ENCODE measurements at regions of chr11 and their contacts with region 1.

Region 1: GRCh38 chr11:63838678-63839507 is at the start of gene MARK2:
- DNase-seq: peak; percentile 98 to 100
- ATAC-seq: peak; percentile 96
- H3K4me3 ChIP-seq: peak within 1 kb of the TSS; percentile 86 to 89
- H3K27ac ChIP-seq: peak within 1 kb of the TSS in 1 of 2 donors; percentile 93
- H3K4me1 ChIP-seq: peaks cover 0 to 6% of the 10 kb centered on the region in 2 donors
- H3K27me3 ChIP-seq: no peaks in the 10 kb centered on the region
- total RNA-seq, gene MARK2: 29.6 to 32.5 TPM

Region 2: DNA sequence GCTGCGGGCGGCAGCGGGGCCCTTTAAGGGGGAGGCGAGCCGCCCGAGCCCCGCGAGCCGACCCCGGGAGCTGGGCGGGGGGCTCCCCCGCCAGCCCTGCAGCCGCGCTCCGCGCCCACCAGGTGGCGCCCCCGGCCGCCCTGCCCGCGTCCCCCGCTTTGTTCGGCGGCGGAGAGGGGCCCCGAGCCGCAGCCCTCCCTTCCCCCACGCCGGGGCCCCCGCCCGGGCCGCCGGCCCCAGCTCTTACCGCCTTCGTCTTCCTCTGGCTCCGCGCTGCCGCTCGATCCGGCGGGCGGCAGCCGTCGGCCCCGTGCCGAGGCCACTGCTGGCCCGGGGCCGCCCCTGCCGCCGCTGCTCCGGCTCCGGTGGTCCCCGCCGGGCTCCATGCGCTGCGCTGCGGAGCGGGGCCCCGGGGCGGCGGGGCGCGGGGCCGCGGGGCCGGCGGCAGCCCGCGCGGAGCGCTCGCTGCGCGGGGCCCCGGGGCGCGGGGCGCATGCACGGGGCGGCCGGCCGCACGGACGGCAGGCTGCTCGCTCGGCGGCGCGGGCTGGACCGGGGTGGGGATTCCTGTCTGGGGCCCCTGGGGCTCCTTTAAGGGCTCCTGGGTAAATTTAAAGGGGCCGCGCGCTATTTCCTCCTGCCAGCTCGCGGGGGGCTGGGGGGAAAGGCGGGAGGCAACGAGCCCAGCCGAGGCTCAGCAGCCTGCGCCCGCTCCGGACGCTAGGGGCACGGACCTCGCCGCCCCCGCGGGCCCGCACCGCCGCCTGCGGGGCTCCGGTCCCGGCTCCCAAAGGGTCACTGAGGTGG is 70.5 kb before region 1 on chr11 and contains the start of gene ZFTA:
- intact Hi-C with region 1: loop called in 1 of 2 experiments (anchors 10 kb)
- DNase-seq: peak; percentile 78 to 87
- ATAC-seq: peak; percentile 52
- H3K4me3 ChIP-seq: peak within 1 kb of the TSS; percentile 93 to 96
- H3K27ac ChIP-seq: peak within 1 kb of the TSS in 1 of 2 donors; percentile 29
- H3K4me1 ChIP-seq: no peaks in the 10 kb centered on the region
- H3K27me3 ChIP-seq: no peaks in the 10 kb centered on the region
- total RNA-seq, gene ZFTA: 20.1 to 30.9 TPM

Region 3: DNA sequence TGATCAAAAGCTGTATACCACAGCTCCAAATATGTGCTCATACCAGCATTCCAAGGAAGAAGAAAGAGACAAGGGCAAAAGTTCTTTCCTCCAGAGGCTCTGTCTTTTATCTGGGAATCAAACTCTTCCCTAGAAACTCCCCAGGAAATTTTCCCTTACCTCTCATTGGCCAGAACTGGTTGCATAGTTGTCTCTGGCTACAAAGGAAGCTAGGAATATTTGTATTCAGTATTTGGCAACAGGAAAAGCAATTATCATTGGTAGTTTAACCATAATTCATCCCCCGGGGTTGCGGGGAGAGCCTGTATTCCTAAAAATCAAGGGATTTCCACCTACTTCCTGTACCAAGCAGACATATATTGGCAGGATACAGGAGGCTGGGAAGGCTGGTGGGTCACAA is 59.9 kb before region 1 on chr11:
- intact Hi-C with region 1: no loop called
- DNase-seq: no peak
- ATAC-seq: no peak
- H3K4me3 ChIP-seq: no peak overlapping the region
- H3K27ac ChIP-seq: no peak overlapping the region
- H3K4me1 ChIP-seq: no peaks in the 10 kb centered on the region
- H3K27me3 ChIP-seq: no peaks in the 10 kb centered on the region

Region 4: GRCh38 chr11:63871962-63872799 is 33.3 kb after region 1 on chr11:
- intact Hi-C with region 1: loop called in 1 of 2 experiments (anchors 5 kb)
- DNase-seq: peak; percentile 81 to 91
- ATAC-seq: peak; percentile 93
- H3K4me3 ChIP-seq: no peak overlapping the region
- H3K27ac ChIP-seq: peak overlapping the region in 1 of 2 donors; percentile 82
- H3K4me1 ChIP-seq: peaks cover 0 to 4% of the 10 kb centered on the region in 2 donors
- H3K27me3 ChIP-seq: no peaks in the 10 kb centered on the region

Region 5: GRCh38 chr11:63882555-63883242 is 43.8 kb after region 1 on chr11:
- intact Hi-C with region 1: no loop called
- DNase-seq: peak; percentile 76 to 77
- ATAC-seq: peak; percentile 71
- H3K4me3 ChIP-seq: no peak overlapping the region
- H3K27ac ChIP-seq: no peak overlapping the region
- H3K4me1 ChIP-seq: no peaks in the 10 kb centered on the region
- H3K27me3 ChIP-seq: no peaks in the 10 kb centered on the region

Region 6: DNA sequence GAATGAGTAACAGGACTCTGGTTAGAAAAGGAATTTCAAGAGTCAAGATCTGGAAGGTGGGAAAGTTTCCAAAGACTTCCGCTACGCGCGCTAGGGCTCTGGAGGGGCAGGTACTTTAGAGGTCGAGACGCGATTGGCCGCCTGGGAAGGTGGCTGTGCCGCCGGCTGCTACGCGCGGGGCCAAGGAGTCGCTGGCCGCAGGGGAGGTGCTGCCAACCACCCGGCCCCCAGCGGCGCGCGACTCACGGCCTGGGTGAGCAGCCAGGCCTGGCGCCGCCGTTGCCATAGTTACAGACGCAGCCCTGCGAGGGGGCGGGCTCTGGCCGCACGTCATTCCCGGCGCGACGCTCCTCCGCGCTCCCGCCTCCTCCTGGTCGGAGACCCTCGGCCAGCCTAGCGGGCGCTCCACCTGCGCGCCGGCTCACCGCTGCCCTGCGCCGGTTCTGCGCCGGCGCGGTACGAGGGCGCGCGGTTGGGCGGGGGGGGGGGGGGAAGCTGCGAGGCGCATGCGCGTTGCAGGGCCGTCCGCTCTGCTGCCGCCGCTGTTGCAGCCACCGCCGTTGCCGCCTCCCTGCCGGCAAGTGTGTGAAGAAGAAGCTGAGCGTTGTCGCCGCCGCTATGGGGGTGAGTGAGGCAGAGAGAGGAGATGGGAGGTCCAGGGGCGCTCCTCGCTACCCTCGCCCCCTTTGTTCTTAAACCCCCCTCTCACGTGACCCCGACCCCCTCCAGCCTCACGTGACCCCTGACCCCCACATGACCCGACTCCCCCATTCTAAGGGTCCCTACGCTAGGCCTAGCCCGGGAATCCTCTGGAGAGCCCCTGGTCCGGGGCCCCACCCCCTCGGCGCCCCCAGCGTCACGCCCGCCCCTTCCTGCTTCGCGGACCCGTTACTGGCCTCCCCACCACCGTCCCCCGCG is 99.8 kb after region 1 on chr11 and contains the start of gene NAA40:
- intact Hi-C with region 1: loop called in 1 of 2 experiments (anchors 2 kb)
- DNase-seq: peak; percentile 95 to 97
- ATAC-seq: peak; percentile 95
- H3K4me3 ChIP-seq: peak within 1 kb of the TSS; percentile 33 to 71
- H3K27ac ChIP-seq: peak within 1 kb of the TSS in 1 of 2 donors; percentile 48
- H3K4me1 ChIP-seq: no peaks in the 10 kb centered on the region
- H3K27me3 ChIP-seq: no peaks in the 10 kb centered on the region
- total RNA-seq, gene NAA40: 16.1 to 26.9 TPM

Region 7: DNA sequence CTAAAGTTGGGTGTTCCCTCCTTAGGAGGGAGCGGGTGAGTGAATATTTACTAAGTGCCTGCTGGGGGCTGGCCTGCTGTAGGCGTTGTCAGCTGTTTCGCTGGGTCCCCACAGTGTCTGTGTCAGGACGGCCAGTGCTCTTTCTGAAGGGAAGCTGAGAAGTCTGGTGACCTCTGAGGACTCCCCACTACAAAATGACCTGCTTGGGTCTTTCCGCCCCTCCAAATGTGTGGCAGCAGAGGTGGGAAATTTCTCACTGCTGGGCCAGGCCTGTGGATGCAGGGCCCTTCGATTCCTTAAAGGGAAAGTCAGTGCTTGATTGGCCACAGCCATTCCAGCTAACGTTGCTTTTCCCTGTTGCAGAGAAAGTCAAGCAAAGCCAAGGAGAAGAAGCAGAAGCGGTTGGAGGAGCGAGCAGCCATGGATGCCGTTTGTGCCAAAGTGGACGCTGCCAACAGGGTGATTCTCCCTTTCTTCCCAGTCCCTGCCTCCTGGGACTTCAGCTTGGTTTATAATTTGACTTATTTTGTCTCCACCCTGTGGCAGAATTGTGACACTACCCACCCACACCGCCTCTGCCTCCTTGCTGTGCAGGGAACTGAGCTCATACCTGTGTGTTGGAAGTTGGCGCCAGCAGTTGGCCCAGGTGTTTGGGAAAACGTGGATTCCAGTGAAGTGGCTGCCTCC is 106.7 kb after region 1 on chr11:
- intact Hi-C with region 1: loop called (anchors 1 kb)
- DNase-seq: peak; percentile 82 to 90
- ATAC-seq: peak; percentile 91
- H3K4me3 ChIP-seq: no peak overlapping the region
- H3K27ac ChIP-seq: peak overlapping the region; percentile 1 to 50
- H3K4me1 ChIP-seq: no peaks in the 10 kb centered on the region
- H3K27me3 ChIP-seq: no peaks in the 10 kb centered on the region

Region 8: DNA sequence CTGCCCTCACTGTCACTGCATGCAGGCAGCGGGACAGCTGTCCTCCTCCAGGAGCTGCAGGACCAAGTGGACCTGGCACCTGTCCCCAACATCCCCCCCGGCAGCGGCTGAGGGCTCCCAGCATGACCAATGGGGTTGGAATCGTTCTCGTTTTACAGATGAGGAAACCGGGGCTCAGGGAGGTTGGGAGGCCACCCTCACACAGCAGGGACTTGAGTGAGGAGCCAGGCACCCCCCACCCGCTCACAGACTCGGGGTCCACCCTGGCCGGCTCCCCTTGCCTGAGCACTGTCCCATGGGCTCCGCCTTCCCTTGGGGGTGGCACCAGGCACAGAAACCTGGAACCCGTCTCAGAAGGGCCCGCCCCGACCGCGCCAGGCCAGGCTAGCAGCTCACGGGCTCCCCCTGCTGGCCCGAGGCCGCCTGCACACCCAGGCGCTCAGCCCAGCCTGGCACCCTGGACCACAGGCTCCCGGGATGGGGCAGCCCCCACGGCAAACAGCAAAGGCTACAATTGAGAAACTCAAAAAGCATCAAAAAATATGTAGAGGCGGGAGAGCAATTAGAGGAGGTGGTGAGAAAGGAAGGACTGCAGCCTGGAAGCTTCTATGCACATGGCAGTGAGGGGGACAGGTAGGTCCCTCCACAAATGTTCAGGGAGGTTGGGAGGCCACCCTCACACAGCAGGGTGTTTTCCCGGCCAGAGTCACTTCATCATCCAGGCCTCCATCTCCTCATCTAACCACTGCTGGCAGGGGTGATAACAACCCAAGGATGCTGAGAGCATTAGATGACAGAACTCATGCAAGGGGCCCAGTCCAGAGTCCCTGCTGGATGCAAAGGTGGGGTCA is 314.2 kb after region 1 on chr11:
- intact Hi-C with region 1: loop called (anchors 5 kb)
- DNase-seq: peak; percentile 71 to 92
- ATAC-seq: peak; percentile 89
- H3K4me3 ChIP-seq: no peak overlapping the region
- H3K27ac ChIP-seq: no peak overlapping the region
- H3K4me1 ChIP-seq: no peaks in the 10 kb centered on the region
- H3K27me3 ChIP-seq: no peaks in the 10 kb centered on the region

Measured in aorta (tissue), 5 donors.